ENCODE measurements at regions of chr6 and their contacts with region 1.

Region 1: DNA sequence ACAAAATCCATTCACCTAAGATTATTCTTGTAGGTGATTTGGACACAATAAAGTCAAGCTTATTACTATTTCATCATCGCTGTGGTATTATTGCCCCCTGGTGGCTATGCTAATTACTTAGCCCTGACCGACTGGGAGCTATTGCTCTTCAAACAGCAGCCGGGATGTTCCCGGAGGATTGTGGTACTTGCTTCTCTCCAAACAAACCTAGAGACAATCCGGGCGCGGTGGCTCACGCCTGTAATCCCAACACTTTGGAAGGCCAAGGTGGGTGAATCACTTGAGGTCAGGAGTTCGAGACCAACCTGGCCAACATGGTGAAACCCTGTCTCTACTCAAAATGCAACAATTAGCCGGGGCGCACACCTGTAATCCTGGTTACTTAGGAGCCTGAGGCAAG is 15.4 kb upstream of the STMND1 start:
- DNase-seq: peak; percentile 56
- ATAC-seq: peak; percentile 57

Region 2: DNA sequence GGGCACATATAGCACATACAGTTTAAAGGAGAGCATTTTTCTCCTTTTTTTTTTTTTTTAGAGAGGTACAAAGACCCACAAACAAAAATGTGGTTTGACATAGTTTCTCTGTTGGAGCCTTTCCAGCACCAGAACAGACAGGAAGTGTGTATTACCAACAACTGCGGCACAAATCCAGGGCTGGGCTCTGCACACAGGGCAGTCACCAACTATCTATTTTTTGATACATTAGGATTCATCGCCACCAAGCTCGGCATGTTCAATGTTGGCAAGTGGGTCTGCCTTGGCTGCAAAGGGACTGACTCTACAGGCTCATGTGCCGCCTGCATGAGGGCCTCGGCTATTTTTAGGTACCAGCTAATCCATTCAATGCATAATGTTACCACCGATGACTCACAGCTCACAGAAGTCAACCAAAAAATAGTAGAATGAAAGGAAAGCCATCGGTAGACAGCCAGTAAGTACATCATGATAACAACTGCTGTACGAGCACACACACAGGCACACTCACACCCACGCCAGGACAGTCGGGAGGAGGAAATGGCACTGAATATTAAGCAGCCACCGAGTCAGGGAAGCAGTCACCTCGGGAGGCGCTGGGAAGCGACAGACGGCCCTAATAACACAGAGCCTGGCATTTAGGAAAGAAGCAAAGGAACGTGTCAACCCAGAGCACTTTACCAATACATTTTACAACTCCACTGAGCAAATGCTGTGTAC is 766.5 kb before region 1 on chr6:
- intact Hi-C with region 1: loop called (anchors 10 kb)
- DNase-seq: no peak
- ATAC-seq: peak; percentile 85

Region 3: GRCh38 chr6:16770701-16771569 is 315.5 kb before region 1 on chr6:
- intact Hi-C with region 1: loop called (anchors 5 kb)
- DNase-seq: peak; percentile 91
- ATAC-seq: peak; percentile 92

Region 4: GRCh38 chr6:16964553-16965501 is 121.6 kb before region 1 on chr6:
- intact Hi-C with region 1: loop called (anchors 5 kb)
- DNase-seq: peak; percentile 73
- ATAC-seq: peak; percentile 85

Measured in Right ventricle myocardium inferior (tissue), 1 donor.